ENCODE measurements at regions of chr3 and their contacts with region 1.

Region 1: DNA sequence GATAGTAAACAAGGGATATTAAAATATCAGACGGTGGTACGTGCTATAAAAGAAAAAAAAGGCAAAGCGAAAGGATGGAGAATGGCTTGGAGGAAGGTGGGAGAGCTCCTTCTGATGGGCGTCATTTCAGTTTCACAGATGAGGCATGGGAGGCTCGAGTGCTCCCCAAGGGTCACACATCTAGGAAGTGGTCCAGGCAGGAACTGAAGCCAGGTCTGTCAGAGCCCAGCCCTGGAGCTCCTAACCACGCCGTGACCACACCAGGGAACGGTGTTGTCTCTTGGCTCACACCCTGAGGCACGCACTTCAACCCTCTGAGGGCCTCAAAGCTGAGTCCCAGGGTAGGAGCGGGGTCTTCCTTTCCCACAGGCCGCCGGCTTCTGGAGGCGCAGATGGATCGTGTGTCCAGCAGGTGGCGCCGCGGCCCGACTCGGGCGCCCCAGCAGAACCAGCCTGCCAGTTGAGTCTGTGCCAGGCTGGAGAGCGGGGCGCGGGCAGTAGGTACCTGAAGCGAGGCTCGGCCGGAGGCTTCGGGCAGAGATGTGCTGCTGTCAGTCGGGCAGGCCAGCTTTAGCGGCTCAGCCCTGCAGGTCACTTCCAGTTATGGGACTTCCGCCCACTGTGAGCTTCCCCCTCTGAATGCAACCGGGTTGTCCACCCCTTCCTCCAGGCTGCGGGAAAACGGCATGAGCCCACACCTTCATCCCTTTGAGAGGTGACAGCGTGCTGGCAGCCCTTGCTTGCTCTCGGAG is 68.1 kb downstream of the SLC6A1 start:
- DNase-seq: peak; percentile 82
- H3K4me3 ChIP-seq: peak overlapping the region; percentile 56
- H3K27ac ChIP-seq: no peak overlapping the region
- H3K4me1 ChIP-seq: no peaks in the 10 kb centered on the region; the same call in 1 of the 2 replicates
- H3K27me3 ChIP-seq: no peaks in the 10 kb centered on the region; the same call in 1 of the 2 replicates

Region 2: GRCh38 chr3:10758304-10759061 is 302.2 kb before region 1 on chr3:
- in situ Hi-C with region 1: loop called (anchors 10 kb)
- DNase-seq: peak; percentile 79
- H3K4me3 ChIP-seq: no peak overlapping the region
- H3K27ac ChIP-seq: no peak overlapping the region
- H3K4me1 ChIP-seq: no peaks in the 10 kb centered on the region
- H3K27me3 ChIP-seq: peaks cover 14% of the 10 kb centered on the region; the same call in 1 of the 2 replicates

Region 3: GRCh38 chr3:10945683-10946287 is 114.9 kb before region 1 on chr3:
- in situ Hi-C with region 1: loop called (anchors 10 kb)
- DNase-seq: peak; percentile 59
- H3K4me3 ChIP-seq: no peak overlapping the region
- H3K27ac ChIP-seq: no peak overlapping the region
- H3K4me1 ChIP-seq: no peaks in the 10 kb centered on the region
- H3K27me3 ChIP-seq: no peaks in the 10 kb centered on the region; the same call in 1 of the 2 replicates

Region 4: DNA sequence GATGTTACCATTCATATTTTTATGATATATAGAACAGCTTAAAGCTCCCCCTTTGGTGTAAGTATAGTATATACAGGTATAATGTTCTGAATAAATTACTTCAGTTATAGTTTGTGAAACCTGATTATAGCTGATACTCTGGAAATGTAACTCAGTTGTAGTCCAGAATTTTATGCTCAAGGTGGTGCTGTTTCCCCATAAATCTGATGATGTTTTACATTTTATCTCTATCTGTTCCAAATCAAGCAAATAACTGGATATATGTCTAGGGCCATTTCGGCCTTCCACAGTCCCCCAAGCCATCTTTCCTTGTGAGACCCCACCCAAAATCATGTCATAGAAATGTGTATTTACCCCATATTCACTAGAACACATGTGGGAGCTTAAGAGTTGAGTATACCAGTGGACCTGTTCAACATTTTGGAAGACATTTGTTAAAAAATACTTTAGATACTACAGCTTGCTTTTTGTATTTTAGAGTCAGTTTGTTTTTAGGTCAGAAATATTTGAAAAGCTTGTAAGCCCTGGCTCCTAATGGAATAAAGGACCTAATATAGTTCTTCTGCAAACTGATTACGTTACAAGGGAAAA is 318.7 kb after region 1 on chr3:
- in situ Hi-C with region 1: no loop called
- DNase-seq: peak; percentile 61
- H3K4me3 ChIP-seq: no peak overlapping the region
- H3K27ac ChIP-seq: no peak overlapping the region
- H3K4me1 ChIP-seq: no peaks in the 10 kb centered on the region
- H3K27me3 ChIP-seq: no peaks in the 10 kb centered on the region

Measured in GM23248 (cell line).